Activated naive CD4-positive, alpha-beta T cell treated with anti-CD3 and anti-CD28 coated beads for 36 hours (primary cell): ENCODE measurements at regions of chr7 and their contacts with region 1.

Region 1: GRCh38 chr7:129553861-129554530 is 51.7 kb downstream of the SMKR1 start:
- DNase-seq: peak; percentile 72
- H3K4me3 Mint-ChIP-seq: peak overlapping the region; percentile 27
- H3K27ac Mint-ChIP-seq: no peak overlapping the region
- H3K4me1 Mint-ChIP-seq: peaks cover 4% of the 10 kb centered on the region
- H3K27me3 Mint-ChIP-seq: no peaks in the 10 kb centered on the region

Region 2: GRCh38 chr7:129017933-129018538 is 536.0 kb before region 1 on chr7:
- CTCF ChIA-PET with region 1: no interaction called
- intact Hi-C with region 1: no loop called
- DNase-seq: no peak
- H3K4me3 Mint-ChIP-seq: no peak overlapping the region
- H3K27ac Mint-ChIP-seq: no peak overlapping the region
- H3K4me1 Mint-ChIP-seq: peaks cover 24% of the 10 kb centered on the region
- H3K27me3 Mint-ChIP-seq: no peaks in the 10 kb centered on the region

Region 3: GRCh38 chr7:129530795-129531391 is 23.1 kb before region 1 on chr7:
- CTCF ChIA-PET with region 1: no interaction called
- intact Hi-C with region 1: loop called (anchors 1 kb)
- DNase-seq: peak; percentile 71
- H3K4me3 Mint-ChIP-seq: no peak overlapping the region
- H3K27ac Mint-ChIP-seq: no peak overlapping the region
- H3K4me1 Mint-ChIP-seq: peaks cover 11% of the 10 kb centered on the region
- H3K27me3 Mint-ChIP-seq: peaks cover 3% of the 10 kb centered on the region

Region 4: DNA sequence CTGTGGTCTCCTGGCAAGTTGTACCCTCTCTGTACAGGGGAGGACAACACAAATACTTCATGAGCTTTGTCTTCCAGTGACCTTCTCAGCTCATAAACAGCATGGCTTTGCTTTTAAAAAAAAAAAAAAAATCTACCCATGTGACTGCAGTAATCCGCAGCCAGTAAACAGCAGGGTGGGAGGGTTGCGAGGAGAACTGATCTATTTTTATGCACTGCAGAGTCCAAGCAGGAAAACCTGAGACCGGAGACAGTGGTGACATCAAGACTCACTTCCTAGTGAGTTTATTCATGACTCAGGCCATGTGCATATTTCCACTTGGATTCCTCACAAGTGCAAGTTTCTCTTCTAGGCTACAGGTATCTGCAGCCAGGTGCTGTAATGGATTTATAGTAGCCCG is 185.4 kb after region 1 on chr7:
- CTCF ChIA-PET with region 1: no interaction called
- intact Hi-C with region 1: no loop called
- DNase-seq: no peak
- H3K4me3 Mint-ChIP-seq: no peak overlapping the region
- H3K27ac Mint-ChIP-seq: no peak overlapping the region
- H3K4me1 Mint-ChIP-seq: peaks cover 2% of the 10 kb centered on the region
- H3K27me3 Mint-ChIP-seq: no peaks in the 10 kb centered on the region